Activated naive CD4-positive, alpha-beta T cell treated with anti-CD3 and anti-CD28 coated beads for 36 hours (primary cell): ENCODE measurements at regions of chr11 and their contacts with region 1.

Region 1: DNA sequence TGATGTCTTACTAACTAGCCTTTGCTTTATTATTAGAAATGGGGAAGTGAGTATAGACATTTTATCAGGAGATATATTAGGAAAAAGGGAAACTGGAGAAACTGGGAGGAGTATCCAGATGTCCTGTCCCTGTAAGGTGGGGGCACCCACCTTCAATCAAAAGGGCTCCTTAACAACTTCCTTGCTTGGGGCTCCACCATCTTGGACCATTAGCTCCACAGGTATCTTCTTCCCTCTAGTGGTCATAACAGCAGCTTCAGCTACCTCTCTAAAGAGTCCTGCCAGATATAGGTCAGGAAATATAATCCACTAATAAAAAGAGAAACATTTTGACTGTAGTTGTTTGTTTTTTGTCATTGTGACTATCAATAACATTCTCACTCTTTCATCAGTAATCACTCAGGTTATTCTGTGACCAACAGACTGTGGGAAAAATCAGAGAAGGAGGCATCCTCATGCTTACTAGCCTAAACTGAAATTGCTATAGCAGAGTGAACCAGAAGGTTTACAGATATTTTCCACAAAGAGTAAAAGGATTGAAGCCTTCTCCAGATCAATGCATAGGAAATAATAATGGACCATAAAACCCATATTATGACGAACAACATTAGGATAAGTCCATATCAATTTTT is 10.4 kb downstream of the OR51B4 start:
- DNase-seq: no peak
- H3K4me3 Mint-ChIP-seq: no peak overlapping the region
- H3K27ac Mint-ChIP-seq: no peak overlapping the region
- H3K4me1 Mint-ChIP-seq: no peaks in the 10 kb centered on the region
- H3K27me3 Mint-ChIP-seq: no peaks in the 10 kb centered on the region

Region 2: DNA sequence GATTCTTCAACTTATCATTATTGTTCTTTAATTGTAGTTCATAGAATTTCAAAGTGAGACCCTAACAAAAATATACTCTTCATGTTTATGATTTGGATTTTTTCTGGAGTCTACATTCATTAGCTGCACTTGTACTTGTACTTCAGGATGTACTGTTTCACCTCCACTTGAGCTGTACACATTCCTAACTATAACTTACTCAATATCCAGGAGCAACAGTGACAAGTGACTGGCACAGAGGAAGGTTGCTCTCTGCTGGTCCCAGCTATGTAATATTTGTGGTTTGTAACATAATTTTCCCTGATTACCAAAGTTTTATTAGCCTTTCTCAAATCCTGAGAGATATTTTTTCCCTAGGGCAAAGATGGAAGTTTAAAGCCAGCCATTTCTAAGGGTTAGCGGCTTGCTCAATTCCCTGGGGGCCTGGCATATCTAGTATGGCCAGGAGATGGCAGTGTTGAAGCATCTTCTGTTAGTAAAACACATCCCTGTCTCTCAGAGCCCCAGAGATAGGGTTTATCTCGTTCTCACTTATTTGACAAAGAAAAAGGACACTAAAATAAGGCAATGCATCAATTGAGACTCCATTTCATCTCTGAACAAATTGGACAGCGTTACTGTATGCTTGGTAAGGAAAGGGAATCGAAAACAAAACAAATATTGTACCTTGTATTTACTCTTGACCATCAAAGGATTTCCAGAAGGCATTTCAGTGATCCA is 167.4 kb before region 1 on chr11:
- CTCF ChIA-PET with region 1: interaction called, 4 read pairs
- intact Hi-C with region 1: loop called (anchors 1 kb)
- DNase-seq: peak; percentile 74
- H3K4me3 Mint-ChIP-seq: no peak overlapping the region
- H3K27ac Mint-ChIP-seq: no peak overlapping the region
- H3K4me1 Mint-ChIP-seq: no peaks in the 10 kb centered on the region
- H3K27me3 Mint-ChIP-seq: peaks cover 22% of the 10 kb centered on the region

Region 3: GRCh38 chr11:5226732-5227310 is 64.5 kb before region 1 on chr11 and contains the start of gene HBB:
- CTCF ChIA-PET with region 1: no interaction called
- intact Hi-C with region 1: no loop called
- DNase-seq: no peak
- H3K4me3 Mint-ChIP-seq: no peak within 1 kb of the TSS
- H3K27ac Mint-ChIP-seq: no peak within 1 kb of the TSS
- H3K4me1 Mint-ChIP-seq: no peaks in the 10 kb centered on the region
- H3K27me3 Mint-ChIP-seq: no peaks in the 10 kb centered on the region
- total RNA-seq, gene HBB: not detected

Region 4: GRCh38 chr11:5242933-5243815 is 48.1 kb before region 1 on chr11:
- CTCF ChIA-PET with region 1: no interaction called
- intact Hi-C with region 1: no loop called
- DNase-seq: no peak
- H3K4me3 Mint-ChIP-seq: no peak overlapping the region
- H3K27ac Mint-ChIP-seq: no peak overlapping the region
- H3K4me1 Mint-ChIP-seq: no peaks in the 10 kb centered on the region
- H3K27me3 Mint-ChIP-seq: peaks cover 15% of the 10 kb centered on the region

Region 5: DNA sequence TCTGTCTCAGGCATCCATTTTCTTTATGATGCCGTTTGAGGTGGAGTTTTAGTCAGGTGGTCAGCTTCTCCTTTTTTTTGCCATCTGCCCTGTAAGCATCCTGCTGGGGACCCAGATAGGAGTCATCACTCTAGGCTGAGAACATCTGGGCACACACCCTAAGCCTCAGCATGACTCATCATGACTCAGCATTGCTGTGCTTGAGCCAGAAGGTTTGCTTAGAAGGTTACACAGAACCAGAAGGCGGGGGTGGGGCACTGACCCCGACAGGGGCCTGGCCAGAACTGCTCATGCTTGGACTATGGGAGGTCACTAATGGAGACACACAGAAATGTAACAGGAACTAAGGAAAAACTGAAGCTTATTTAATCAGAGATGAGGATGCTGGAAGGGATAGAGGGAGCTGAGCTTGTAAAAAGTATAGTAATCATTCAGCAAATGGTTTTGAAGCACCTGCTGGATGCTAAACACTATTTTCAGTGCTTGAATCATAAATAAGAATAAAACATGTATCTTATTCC is 10.7 kb before region 1 on chr11:
- CTCF ChIA-PET with region 1: no interaction called
- intact Hi-C with region 1: no loop called
- DNase-seq: peak; percentile 46
- H3K4me3 Mint-ChIP-seq: no peak overlapping the region
- H3K27ac Mint-ChIP-seq: no peak overlapping the region
- H3K4me1 Mint-ChIP-seq: no peaks in the 10 kb centered on the region
- H3K27me3 Mint-ChIP-seq: no peaks in the 10 kb centered on the region